ENCODE measurements at regions of chr1 and their contacts with region 1.

Region 1: DNA sequence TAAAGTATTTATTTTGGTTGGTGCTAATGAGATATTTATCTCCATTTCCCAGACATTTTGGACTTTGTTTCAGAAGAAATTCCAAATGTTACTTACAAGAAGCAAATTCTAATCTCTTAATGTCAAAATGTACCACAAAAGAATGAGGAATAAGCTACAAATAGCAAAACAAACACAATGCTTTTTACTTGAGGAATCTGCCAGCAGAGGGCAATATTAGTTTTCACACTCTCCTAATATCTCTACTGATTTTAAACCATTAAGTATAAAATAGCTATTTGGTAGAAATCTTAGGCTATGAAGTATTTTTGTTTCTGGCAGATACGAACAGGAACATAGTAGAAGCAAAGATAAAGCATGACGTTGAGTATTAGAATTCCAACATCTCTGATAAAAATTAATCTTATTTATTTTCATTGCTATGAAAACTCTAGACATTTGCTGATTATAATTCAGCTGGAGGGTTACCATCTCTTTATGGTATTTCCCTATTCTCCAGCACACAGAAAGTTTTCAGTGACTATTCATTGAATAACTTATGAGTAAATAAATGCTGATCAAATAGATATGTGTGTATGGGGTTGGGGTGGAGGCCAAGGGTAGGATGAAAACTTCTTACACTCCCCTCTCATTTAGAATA is 13.4 kb upstream of the HMCN1 start:
- DNase-seq: no peak
- H3K4me3 ChIP-seq: no peak overlapping the region
- H3K27ac ChIP-seq: peak overlapping the region in 1 of 2 donors; percentile 19
- H3K4me1 ChIP-seq: peaks cover 0 to 3% (median under 1%) of the 10 kb centered on the region in 4 donors
- H3K27me3 ChIP-seq: no peaks in the 10 kb centered on the region
- CTCF ChIP-seq: peak; percentile 34 to 49

Region 2: GRCh38 chr1:185574139-185574835 is 146.5 kb before region 1 on chr1:
- intact Hi-C with region 1: no loop called
- DNase-seq: no peak
- H3K4me3 ChIP-seq: no peak overlapping the region
- H3K27ac ChIP-seq: no peak overlapping the region
- H3K4me1 ChIP-seq: no peaks in the 10 kb centered on the region
- H3K27me3 ChIP-seq: no peaks in the 10 kb centered on the region
- CTCF ChIP-seq: no peak

Region 3: GRCh38 chr1:186212544-186213226 is 491.9 kb after region 1 on chr1:
- intact Hi-C with region 1: loop called (anchors 10 kb)
- DNase-seq: no peak
- H3K4me3 ChIP-seq: no peak overlapping the region
- H3K27ac ChIP-seq: no peak overlapping the region
- H3K4me1 ChIP-seq: no peaks in the 10 kb centered on the region
- H3K27me3 ChIP-seq: no peaks in the 10 kb centered on the region
- CTCF ChIP-seq: peak; percentile 65 to 78

Measured in tibial artery (tissue), 4 donors.